Activated T-helper 2 cell treated with anti-CD3 and anti-CD28 coated beads, Interferon-gamma antibody, Interleukin-2, Interleukin-4, amounts not matched to agents 10 μg/mL and 5 μg/mL and 100 μg/mL, durations not matched to agents 14 hours and 24 hours and 36 hours (primary cell): ENCODE measurements at regions of chr10 and their contacts with region 1.

Region 1: GRCh38 chr10:75235375-75236177 is at the start of gene COMTD1:
- DNase-seq: peak; percentile 92
- H3K4me3 Mint-ChIP-seq: peak within 1 kb of the TSS; percentile 81
- H3K27ac Mint-ChIP-seq: peak within 1 kb of the TSS; percentile 70
- H3K4me1 Mint-ChIP-seq: peaks cover 16% of the 10 kb centered on the region
- H3K27me3 Mint-ChIP-seq: no peaks in the 10 kb centered on the region
- total RNA-seq, gene COMTD1: 38.5 and 38.7 TPM in 2 replicates

Region 2: GRCh38 chr10:75042292-75042974 is 193.1 kb before region 1 on chr10:
- intact Hi-C with region 1: loop called (anchors 5 kb)
- DNase-seq: no peak
- H3K4me3 Mint-ChIP-seq: no peak overlapping the region
- H3K27ac Mint-ChIP-seq: peak overlapping the region; percentile 85
- H3K4me1 Mint-ChIP-seq: peaks cover 38% of the 10 kb centered on the region
- H3K27me3 Mint-ChIP-seq: no peaks in the 10 kb centered on the region

Region 3: GRCh38 chr10:75187961-75188426 is 47.6 kb before region 1 on chr10:
- intact Hi-C with region 1: loop called (anchors 1 kb)
- DNase-seq: peak; percentile 58
- H3K4me3 Mint-ChIP-seq: no peak overlapping the region
- H3K27ac Mint-ChIP-seq: peak overlapping the region; percentile 42
- H3K4me1 Mint-ChIP-seq: peaks cover 8% of the 10 kb centered on the region
- H3K27me3 Mint-ChIP-seq: no peaks in the 10 kb centered on the region

Region 4: DNA sequence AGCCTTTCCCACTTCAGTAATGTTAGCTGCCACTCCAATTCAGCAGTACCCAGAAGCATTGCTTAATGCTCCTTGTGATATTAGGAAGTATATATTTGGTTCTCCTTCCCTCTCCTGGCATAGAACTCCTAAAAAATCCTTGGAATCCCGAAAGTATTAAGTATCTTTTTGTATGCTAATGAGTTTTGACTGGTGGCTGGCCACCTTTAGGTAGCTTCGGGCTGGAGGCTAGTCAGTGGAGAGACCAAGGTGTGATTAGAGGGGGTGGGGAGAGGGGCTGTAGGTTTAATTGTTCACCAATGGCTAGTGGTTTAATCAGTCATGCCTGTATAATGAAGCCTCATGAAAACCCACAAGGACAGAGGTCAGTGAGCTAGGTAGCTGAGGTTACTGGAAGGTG is 12.1 kb before region 1 on chr10:
- intact Hi-C with region 1: no loop called
- DNase-seq: no peak
- H3K4me3 Mint-ChIP-seq: no peak overlapping the region
- H3K27ac Mint-ChIP-seq: no peak overlapping the region
- H3K4me1 Mint-ChIP-seq: peaks cover 28% of the 10 kb centered on the region
- H3K27me3 Mint-ChIP-seq: no peaks in the 10 kb centered on the region